GM12878 (cell line): ENCODE measurements at regions of chr1 and their contacts with region 1.

Region 1: DNA sequence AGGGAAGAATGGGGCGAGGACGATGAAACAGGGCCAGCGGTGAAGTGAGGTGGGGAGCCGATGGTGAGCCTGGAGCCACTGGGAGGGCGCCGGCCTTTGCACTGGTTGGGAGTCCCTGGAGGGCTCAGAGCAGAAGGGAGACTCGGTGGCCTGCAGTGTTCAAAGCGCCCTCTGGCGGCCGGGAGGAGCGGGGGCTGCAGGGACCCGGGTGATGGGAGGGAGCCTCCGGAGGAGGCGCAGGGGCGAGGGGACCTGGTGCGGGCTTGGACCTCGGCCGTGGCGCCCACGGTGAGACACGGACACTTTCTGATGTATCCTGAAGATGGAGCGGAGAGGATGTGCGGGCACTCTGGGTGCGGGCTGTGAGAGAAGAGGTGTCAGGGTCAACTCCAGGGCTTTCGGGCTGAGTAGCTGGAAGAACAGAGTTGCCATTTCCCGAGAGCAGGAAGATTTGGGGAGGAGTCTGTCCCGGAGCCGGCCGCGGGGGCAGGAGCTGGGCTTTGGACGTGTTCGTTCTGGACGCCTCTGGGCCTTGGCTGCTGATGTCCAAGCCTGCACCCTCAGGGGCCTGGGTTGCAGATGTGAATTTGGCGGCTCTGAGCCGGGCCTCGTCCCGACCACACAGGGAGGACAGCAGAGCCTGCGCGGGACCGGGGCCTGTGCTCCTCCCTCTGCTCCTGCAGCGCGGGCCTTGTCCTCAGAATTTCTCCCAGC is 29.7 kb downstream of the HEYL start:
- DNase-seq: no peak
- ATAC-seq: peak; percentile 97
- H3K4me3 ChIP-seq: no peak overlapping the region
- H3K27ac ChIP-seq: no peak overlapping the region
- H3K4me1 ChIP-seq: peaks cover 5% of the 10 kb centered on the region
- H3K27me3 ChIP-seq: no peaks in the 10 kb centered on the region
- CTCF ChIP-seq: peak; percentile 78 to 95 (median 81)
- EP300 ChIP-seq: no peak
- POLR2A ChIP-seq: no peak
- RAD21 ChIP-seq: peak; percentile 60

Region 2: DNA sequence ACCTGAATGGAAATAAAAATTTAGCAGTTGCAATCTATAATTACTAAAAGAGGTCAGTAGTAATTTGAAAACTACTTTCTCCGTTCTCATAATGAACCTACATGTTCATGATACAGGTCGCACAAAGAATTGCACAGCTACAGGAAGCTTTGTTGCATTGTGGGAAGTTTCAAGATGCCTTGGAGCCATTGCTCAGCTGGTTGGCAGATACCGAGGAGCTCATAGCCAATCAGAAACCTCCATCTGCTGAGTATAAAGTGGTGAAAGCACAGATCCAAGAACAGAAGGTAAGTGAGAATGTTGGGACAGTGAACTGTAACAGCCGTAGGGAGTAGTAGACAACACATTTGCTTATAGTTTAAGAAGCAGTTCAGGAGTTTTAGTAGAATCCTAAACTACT is 187.2 kb before region 1 on chr1:
- CTCF ChIA-PET with region 1: no interaction called
- POLR2A ChIA-PET with region 1: no interaction called
- RAD21 ChIA-PET with region 1: no interaction called
- SMC1A ChIA-PET with region 1: no interaction called
- in situ Hi-C with region 1: no loop called
- intact Hi-C with region 1: no loop called
- DNase-seq: no peak
- ATAC-seq: no peak
- H3K4me3 ChIP-seq: no peak overlapping the region
- H3K27ac ChIP-seq: no peak overlapping the region
- H3K4me1 ChIP-seq: no peaks in the 10 kb centered on the region
- H3K27me3 ChIP-seq: no peaks in the 10 kb centered on the region
- CTCF ChIP-seq: no peak
- EP300 ChIP-seq: no peak
- POLR2A ChIP-seq: no peak
- RAD21 ChIP-seq: no peak

Region 3: DNA sequence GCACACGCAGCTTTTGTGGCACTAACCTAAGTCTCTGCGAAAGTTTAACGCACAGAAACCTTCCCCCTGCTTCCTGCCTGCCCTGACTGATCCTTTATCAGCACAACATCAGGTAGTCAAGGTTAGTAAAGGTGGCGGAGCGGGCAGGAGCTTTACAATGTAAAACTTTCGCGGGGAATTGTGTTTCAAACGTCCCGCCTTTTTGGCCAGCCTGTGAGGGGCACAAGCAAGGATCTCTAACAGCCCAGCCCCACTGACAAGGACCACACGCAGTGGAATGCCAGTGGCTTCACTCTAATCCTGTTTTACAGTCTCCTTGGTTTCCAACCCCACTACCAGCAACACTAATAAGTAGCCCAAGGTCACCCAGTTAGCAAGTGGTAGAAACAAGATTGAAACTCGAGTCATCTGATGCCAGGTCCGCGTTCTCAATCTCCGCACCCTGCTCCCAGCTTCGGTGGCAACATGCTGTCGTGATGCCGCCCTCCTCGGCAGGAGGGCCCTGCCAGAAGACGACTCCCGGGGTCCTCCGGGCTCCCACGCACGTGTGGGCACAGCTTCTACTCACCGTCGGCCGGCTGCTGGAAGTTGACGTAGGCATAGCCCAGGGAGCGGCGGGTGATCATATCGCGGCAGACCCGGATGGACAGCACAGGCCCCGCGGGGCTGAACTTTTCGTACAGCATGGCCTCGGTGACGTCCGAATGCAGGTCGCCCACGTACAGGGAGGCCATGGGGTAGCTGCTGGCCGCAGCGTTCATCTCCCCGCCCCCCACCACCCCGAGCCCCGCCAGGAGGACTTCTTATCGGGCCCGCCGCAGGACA is 34.4 kb before region 1 on chr1:
- CTCF ChIA-PET with region 1: interaction called, 31 read pairs
- POLR2A ChIA-PET with region 1: interaction called, 9 read pairs
- RAD21 ChIA-PET with region 1: interaction called, 8 read pairs
- SMC1A ChIA-PET with region 1: interaction called, 19 read pairs
- in situ Hi-C with region 1: no loop called
- intact Hi-C with region 1: no loop called
- DNase-seq: no peak
- ATAC-seq: peak; percentile 67
- H3K4me3 ChIP-seq: peak overlapping the region; percentile 92
- H3K27ac ChIP-seq: peak overlapping the region; percentile 79
- H3K4me1 ChIP-seq: peaks cover 8% of the 10 kb centered on the region; the same call in 1 of the 2 replicates
- H3K27me3 ChIP-seq: no peaks in the 10 kb centered on the region
- CTCF ChIP-seq: no peak
- EP300 ChIP-seq: no peak
- POLR2A ChIP-seq: peak; percentile 58; the same call in 1 of the 2 replicates
- RAD21 ChIP-seq: no peak

Region 4: DNA sequence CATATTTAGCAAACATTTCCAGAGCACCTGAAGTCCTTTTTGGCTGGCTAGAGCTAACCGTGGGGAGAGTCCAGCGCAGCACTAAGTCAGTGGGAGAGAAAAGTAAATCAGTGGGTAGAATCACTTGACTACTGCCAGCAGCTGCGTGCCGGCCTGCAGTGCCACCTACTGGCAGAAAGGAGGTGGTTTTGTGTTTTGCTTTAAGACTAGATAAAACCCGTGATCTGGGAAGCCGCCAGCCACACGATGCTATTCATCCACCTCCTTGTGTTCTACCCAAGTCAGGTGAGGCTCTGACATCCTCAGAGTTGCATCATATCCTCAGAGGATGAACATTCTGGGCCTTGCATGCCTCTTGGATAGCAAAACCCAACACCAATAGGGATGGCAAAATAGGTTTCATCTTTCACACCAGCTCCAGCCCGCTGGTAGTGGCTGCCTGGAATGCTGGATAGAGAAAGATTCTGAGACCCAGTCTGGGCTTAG is 43.8 kb after region 1 on chr1:
- CTCF ChIA-PET with region 1: interaction called, 312 read pairs
- POLR2A ChIA-PET with region 1: interaction called, 4 read pairs
- RAD21 ChIA-PET with region 1: interaction called, 49 read pairs
- SMC1A ChIA-PET with region 1: interaction called, 35 read pairs
- in situ Hi-C with region 1: no loop called
- intact Hi-C with region 1: loop called (anchors 1 kb)
- DNase-seq: peak; percentile 23
- ATAC-seq: peak; percentile 82
- H3K4me3 ChIP-seq: no peak overlapping the region
- H3K27ac ChIP-seq: no peak overlapping the region
- H3K4me1 ChIP-seq: peaks cover 3% of the 10 kb centered on the region; the same call in 1 of the 2 replicates
- H3K27me3 ChIP-seq: no peaks in the 10 kb centered on the region; a peak in 1 of 4 replicates
- CTCF ChIP-seq: peak; percentile 87 to 91 (median 91)
- EP300 ChIP-seq: no peak
- POLR2A ChIP-seq: no peak
- RAD21 ChIP-seq: peak; percentile 82

Region 5: DNA sequence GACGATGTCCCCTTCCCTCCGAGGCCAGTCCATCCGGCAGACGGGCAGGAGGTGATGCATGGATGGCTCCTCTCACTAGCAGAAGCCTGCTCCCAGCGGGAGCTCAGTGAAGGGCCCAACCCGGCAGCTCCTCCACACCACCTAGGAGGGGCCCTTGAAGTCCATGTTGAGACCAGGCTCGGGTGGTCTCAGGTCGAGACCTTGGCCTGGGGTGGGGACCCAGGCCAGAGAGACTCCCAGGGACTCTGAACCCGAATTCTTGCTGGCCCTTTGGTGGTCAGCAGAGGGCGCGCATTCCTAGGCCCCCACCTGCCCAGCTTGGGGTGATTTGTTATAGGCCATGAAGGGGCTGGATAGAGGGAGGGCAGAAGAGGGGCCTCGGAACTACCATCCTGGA is 62.8 kb after region 1 on chr1:
- CTCF ChIA-PET with region 1: interaction called, 69 read pairs
- POLR2A ChIA-PET with region 1: interaction called, 4 read pairs
- RAD21 ChIA-PET with region 1: interaction called, 5 read pairs
- SMC1A ChIA-PET with region 1: interaction called, 6 read pairs
- in situ Hi-C with region 1: no loop called
- intact Hi-C with region 1: no loop called
- DNase-seq: no peak
- ATAC-seq: peak; percentile 70
- H3K4me3 ChIP-seq: peak overlapping the region; percentile 64
- H3K27ac ChIP-seq: no peak overlapping the region
- H3K4me1 ChIP-seq: peaks cover 17% of the 10 kb centered on the region
- H3K27me3 ChIP-seq: peaks cover 0 to 5% of the 10 kb centered on the region in 2 experiments; a peak in 2 of 4 replicates
- CTCF ChIP-seq: peak; percentile 50 to 71 (median 63)
- EP300 ChIP-seq: no peak
- POLR2A ChIP-seq: no peak
- RAD21 ChIP-seq: peak; percentile 59

Region 6: DNA sequence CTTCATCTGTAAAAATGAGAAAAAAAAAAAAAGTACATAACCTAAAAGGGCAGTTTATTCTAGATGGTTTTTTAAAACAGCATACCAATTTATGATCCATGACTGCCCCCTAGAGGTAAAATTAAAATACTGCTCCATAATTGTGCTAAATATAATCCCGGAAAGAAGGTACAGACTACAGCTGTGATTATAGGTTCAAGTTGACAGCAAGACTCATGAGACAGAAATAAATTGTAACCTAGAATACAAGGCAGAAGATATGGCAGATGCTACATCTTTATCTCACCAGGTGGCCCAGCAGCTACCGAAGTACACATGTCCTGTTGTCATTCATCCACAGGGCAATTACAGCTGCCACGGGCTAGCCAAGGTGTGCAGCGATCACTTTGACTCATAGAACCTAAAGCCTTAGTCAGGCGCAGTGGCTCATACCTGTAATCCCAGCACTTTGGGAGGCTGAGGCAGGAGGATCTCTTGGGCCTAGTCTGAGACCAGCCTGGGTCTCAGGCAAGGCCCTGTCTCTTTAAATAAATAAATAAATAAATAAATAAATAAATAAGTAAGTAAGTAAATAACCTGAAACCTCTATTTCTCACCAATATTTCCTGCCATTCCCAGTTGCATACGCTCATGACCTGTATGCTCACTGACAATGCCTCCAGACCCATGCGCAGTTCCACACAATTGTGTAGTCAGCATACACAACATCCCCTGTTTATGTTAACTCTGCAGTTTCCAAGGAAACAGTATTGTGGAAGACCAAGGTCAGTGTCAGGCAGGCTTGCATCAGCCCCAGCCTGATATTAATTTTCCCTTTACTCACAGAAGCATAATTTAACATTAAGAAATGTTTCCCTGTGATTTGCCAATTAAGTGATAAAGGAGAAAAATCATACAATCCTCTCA is 110.6 kb after region 1 on chr1:
- CTCF ChIA-PET with region 1: interaction called, 35 read pairs
- POLR2A ChIA-PET with region 1: no interaction called
- RAD21 ChIA-PET with region 1: interaction called, 29 read pairs
- SMC1A ChIA-PET with region 1: interaction called, 8 read pairs
- in situ Hi-C with region 1: loop called (anchors 5 kb)
- intact Hi-C with region 1: loop called (anchors 1 kb)
- DNase-seq: no peak
- ATAC-seq: peak; percentile 76
- H3K4me3 ChIP-seq: no peak overlapping the region
- H3K27ac ChIP-seq: no peak overlapping the region
- H3K4me1 ChIP-seq: no peaks in the 10 kb centered on the region
- H3K27me3 ChIP-seq: no peaks in the 10 kb centered on the region
- CTCF ChIP-seq: peak; percentile 34 to 74 (median 59)
- EP300 ChIP-seq: no peak
- POLR2A ChIP-seq: no peak
- RAD21 ChIP-seq: peak; percentile 87

Region 7: DNA sequence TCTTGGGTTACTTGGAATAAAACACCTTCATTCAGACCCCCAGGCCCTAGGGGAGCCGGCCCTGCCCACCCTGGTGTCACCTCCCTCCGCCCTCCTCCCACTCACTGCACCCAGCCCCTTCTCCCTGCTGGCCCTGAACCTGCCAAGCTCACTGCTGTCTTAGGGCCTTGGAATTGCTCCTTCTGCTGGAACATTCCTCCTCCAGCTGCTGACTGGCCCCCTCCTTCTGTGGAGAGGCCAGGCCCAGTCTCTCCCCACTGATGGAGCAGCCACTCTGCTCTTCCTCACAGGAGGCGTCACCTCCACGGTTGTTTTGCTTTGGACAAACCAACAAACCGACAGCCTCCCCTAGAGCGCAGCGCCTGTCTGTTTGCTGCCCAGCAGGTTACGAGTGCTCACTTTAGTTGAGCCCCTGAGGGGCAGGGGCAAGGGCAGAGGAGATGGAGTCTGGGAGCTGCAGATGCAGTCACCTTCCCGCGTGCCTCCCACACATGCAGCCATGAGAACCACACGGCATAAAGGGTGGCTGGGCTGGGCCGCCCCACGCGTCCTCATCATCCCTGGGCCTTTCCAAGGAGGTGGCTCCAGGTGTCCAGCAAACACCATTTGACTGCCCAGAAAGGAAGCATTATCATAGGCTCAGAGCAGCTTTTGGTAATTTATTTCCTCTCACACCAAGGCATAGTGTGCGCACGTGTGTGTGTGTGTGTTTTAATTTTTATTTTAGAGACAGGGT is 151.9 kb after region 1 on chr1:
- CTCF ChIA-PET with region 1: no interaction called
- POLR2A ChIA-PET with region 1: no interaction called
- RAD21 ChIA-PET with region 1: no interaction called
- SMC1A ChIA-PET with region 1: no interaction called
- in situ Hi-C with region 1: no loop called
- intact Hi-C with region 1: no loop called
- DNase-seq: no peak
- ATAC-seq: no peak
- H3K4me3 ChIP-seq: no peak overlapping the region
- H3K27ac ChIP-seq: no peak overlapping the region
- H3K4me1 ChIP-seq: no peaks in the 10 kb centered on the region
- H3K27me3 ChIP-seq: no peaks in the 10 kb centered on the region
- CTCF ChIP-seq: no peak
- EP300 ChIP-seq: no peak
- POLR2A ChIP-seq: peak; percentile 29; the same call in 1 of the 2 replicates
- RAD21 ChIP-seq: no peak